H1 (cell line): ENCODE measurements at regions of chr5 and their contacts with region 1.

Region 1: GRCh38 chr5:159965031-159965837 is 43.7 kb upstream of the TTC1 start:
- DNase-seq: peak in 1 of 2 experiments; percentile 85
- H3K4me3 ChIP-seq: no peak overlapping the region
- H3K27ac ChIP-seq: no peak overlapping the region
- H3K4me1 ChIP-seq: no peaks in the 10 kb centered on the region
- H3K27me3 ChIP-seq: peaks cover under 1 to 2% (median under 1%) of the 10 kb centered on the region in 4 experiments; a peak in 4 of 7 replicates
- CTCF ChIP-seq: peak; percentile 73 to 89 (median 78)
- EP300 ChIP-seq: no peak
- POLR2A ChIP-seq: no peak
- RAD21 ChIP-seq: peak; percentile 88 to 92

Region 2: GRCh38 chr5:159975462-159976019 is 10.3 kb after region 1 on chr5:
- CTCF ChIA-PET with region 1: interaction called, 10 read pairs
- POLR2A ChIA-PET with region 1: no interaction called
- DNase-seq: no peak
- H3K4me3 ChIP-seq: no peak overlapping the region
- H3K27ac ChIP-seq: no peak overlapping the region
- H3K4me1 ChIP-seq: peaks cover 0 to 4% (median 2%) of the 10 kb centered on the region in 4 experiments; a peak in 2 of 7 replicates
- H3K27me3 ChIP-seq: peaks cover 23 to 38% (median 35%) of the 10 kb centered on the region in 4 experiments
- CTCF ChIP-seq: no peak
- EP300 ChIP-seq: no peak
- POLR2A ChIP-seq: no peak
- RAD21 ChIP-seq: peak in 1 of 2 experiments; percentile 30; a peak in 2 of 4 replicates